Activated T-helper 2 cell treated with anti-CD3 and anti-CD28 coated beads, Interferon-gamma antibody, Interleukin-2, Interleukin-4, amounts not matched to agents 10 μg/mL and 5 μg/mL and 100 μg/mL, durations not matched to agents 14 hours and 24 hours and 36 hours (primary cell): ENCODE measurements at regions of chr3 and their contacts with region 1.

Region 1: GRCh38 chr3:182683453-182683852 is 109.9 kb upstream of the ATP11B start:
- DNase-seq: peak; percentile 37
- H3K4me3 Mint-ChIP-seq: peak overlapping the region; percentile 59
- H3K27ac Mint-ChIP-seq: no peak overlapping the region
- H3K4me1 Mint-ChIP-seq: peaks cover 12% of the 10 kb centered on the region
- H3K27me3 Mint-ChIP-seq: peaks cover 44% of the 10 kb centered on the region

Region 2: DNA sequence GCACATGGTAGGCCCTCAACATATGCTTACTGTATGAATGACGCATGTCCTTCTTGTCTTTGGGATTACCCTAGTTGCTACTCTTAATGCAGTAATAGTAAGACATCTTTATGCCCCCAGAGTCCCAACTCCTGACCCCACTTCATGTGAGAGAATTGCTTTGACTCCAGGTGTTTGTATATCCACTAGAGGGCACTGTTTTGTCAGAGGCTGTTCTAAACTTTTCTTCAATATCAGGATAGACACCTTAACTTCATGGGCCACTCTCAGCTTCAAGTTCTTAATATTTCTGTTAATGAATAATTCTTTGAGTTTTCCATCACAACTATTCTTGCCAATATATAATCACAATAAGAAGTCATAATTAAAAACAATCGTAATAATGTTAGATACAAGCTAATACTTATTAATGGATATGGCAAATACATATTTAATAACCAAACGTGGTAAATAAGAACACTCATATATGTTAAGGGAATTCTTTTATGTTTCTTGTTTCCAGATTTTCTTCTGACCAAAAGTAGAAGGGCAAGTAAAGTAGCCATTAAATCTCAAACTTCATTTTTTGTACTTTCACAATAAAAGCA is 1356.7 kb before region 1 on chr3:
- intact Hi-C with region 1: loop called (anchors 5 kb)
- DNase-seq: no peak
- H3K4me3 Mint-ChIP-seq: no peak overlapping the region
- H3K27ac Mint-ChIP-seq: no peak overlapping the region
- H3K4me1 Mint-ChIP-seq: no peaks in the 10 kb centered on the region
- H3K27me3 Mint-ChIP-seq: no peaks in the 10 kb centered on the region

Region 3: DNA sequence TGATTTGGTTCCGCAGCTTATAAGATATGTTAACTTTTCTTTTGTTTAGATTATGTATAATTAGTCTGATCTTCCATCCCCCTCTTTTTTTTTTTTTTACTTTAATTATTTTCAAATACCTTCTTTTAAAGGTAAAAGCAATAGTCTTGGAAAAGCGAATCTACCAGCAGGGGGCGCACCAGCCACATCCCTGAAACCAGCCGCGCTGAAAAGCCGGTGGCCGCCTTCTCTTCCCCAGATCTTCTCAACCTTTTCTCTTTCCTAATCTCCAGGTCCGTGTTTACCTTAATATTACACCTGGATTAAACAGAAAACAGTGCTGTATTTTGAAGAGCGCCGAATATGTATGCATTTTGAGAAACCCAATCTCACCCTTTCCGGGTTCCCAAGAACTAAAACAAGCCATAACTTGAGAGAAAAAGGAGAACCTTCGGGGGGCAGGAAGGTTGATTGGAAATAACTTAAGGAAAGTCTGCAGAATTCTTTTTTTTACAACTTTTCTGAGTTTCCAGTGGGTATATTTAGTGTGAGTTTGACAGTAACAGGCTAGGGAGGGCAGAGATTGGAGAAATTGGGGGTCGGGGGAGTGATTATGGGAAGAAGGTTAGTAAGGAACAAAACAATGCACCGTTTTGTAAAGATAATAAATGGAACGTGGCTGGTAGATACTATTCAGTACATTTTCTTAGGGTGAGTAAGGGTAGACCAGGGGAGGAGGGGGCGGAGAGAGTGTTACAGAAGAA is 973.7 kb before region 1 on chr3:
- intact Hi-C with region 1: loop called (anchors 1 kb)
- DNase-seq: peak; percentile 40
- H3K4me3 Mint-ChIP-seq: peak overlapping the region; percentile 45
- H3K27ac Mint-ChIP-seq: no peak overlapping the region
- H3K4me1 Mint-ChIP-seq: peaks cover 6% of the 10 kb centered on the region
- H3K27me3 Mint-ChIP-seq: peaks cover 62% of the 10 kb centered on the region

Region 4: GRCh38 chr3:181726351-181727330 is 956.8 kb before region 1 on chr3:
- intact Hi-C with region 1: loop called (anchors 5 kb)
- DNase-seq: no peak
- H3K4me3 Mint-ChIP-seq: peak overlapping the region; percentile 15
- H3K27ac Mint-ChIP-seq: no peak overlapping the region
- H3K4me1 Mint-ChIP-seq: peaks cover 6% of the 10 kb centered on the region
- H3K27me3 Mint-ChIP-seq: peaks cover 86% of the 10 kb centered on the region

Region 5: GRCh38 chr3:182248351-182248880 is 435.0 kb before region 1 on chr3:
- intact Hi-C with region 1: loop called (anchors 2 kb)
- DNase-seq: no peak
- H3K4me3 Mint-ChIP-seq: no peak overlapping the region
- H3K27ac Mint-ChIP-seq: no peak overlapping the region
- H3K4me1 Mint-ChIP-seq: no peaks in the 10 kb centered on the region
- H3K27me3 Mint-ChIP-seq: no peaks in the 10 kb centered on the region

Region 6: GRCh38 chr3:182392182-182392937 is 291.1 kb before region 1 on chr3:
- intact Hi-C with region 1: loop called (anchors 5 kb)
- DNase-seq: no peak
- H3K4me3 Mint-ChIP-seq: no peak overlapping the region
- H3K27ac Mint-ChIP-seq: no peak overlapping the region
- H3K4me1 Mint-ChIP-seq: no peaks in the 10 kb centered on the region
- H3K27me3 Mint-ChIP-seq: no peaks in the 10 kb centered on the region

Region 7: GRCh38 chr3:182644800-182645433 is 38.5 kb before region 1 on chr3:
- intact Hi-C with region 1: loop called (anchors 2 kb)
- DNase-seq: no peak
- H3K4me3 Mint-ChIP-seq: no peak overlapping the region
- H3K27ac Mint-ChIP-seq: no peak overlapping the region
- H3K4me1 Mint-ChIP-seq: peaks cover 4% of the 10 kb centered on the region
- H3K27me3 Mint-ChIP-seq: peaks cover 5% of the 10 kb centered on the region

Region 8: GRCh38 chr3:182740710-182741109 is 57.3 kb after region 1 on chr3:
- intact Hi-C with region 1: no loop called
- DNase-seq: no peak
- H3K4me3 Mint-ChIP-seq: no peak overlapping the region
- H3K27ac Mint-ChIP-seq: no peak overlapping the region
- H3K4me1 Mint-ChIP-seq: peaks cover 5% of the 10 kb centered on the region
- H3K27me3 Mint-ChIP-seq: peaks cover 16% of the 10 kb centered on the region